CD8-positive, alpha-beta T cell (primary cell): ENCODE measurements at regions of chr17 and their contacts with region 1.

Region 1: DNA sequence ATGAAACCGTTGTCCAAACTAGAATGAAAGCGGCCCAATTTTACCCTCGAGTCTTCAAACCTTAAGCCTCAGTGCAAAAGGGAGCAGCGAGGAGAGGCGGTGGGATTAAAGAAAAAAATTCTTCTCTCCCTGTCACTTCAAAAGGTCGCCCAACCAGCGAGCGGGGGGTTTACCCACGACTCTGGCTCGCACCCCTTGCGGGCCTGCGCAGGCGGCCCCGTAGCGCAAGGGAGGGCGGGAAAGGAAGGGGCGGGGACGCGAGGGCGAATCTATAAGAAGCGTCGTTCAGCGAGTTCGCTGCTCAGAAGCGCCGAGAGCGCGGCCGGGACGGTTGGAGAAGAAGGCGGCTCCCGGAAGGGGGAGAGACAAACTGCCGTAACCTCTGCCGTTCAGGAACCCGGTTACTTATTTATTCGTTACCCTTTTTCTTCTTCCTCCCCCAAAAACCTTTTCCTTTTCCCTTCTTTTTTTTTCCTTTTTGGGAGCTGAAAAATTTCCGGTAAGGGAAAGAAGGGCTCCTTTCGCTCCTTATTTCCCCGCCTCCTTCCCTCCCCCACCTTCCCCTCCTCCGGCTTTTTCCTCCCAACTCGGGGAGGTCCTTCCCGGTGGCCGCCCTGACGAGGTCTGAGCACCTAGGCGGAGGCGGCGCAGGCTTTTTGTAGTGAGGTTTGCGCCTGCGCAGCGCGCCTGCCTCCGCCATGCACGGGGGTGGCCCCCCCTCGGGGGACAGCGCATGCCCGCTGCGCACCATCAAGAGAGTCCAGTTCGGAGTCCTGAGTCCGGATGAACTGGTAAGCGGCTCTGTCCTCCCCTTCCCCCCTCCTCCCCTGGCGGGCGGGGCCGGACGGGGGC is at the start of gene POLR2A:
- DNase-seq: peak; percentile 96 to 99 (median 98)
- ATAC-seq: peak; percentile 66
- H3K4me3 ChIP-seq: peak within 1 kb of the TSS; percentile 95 to 98
- H3K4me3 Mint-ChIP-seq: peak within 1 kb of the TSS; percentile 100
- H3K27ac ChIP-seq: peak within 1 kb of the TSS; percentile 99 to 100
- H3K27ac Mint-ChIP-seq: peak within 1 kb of the TSS; percentile 100
- H3K4me1 ChIP-seq: peaks cover 58% of the 10 kb centered on the region
- H3K4me1 Mint-ChIP-seq: peaks cover 74% of the 10 kb centered on the region
- H3K27me3 ChIP-seq: no peaks in the 10 kb centered on the region
- H3K27me3 Mint-ChIP-seq: no peaks in the 10 kb centered on the region
- CTCF ChIP-seq: no peak
- total RNA-seq, gene POLR2A: 508 to 546 TPM

Region 2: GRCh38 chr17:6677158-6677831 is 807.0 kb before region 1 on chr17:
- CTCF ChIA-PET with region 1: no interaction called
- POLR2A ChIA-PET with region 1: no interaction called
- intact Hi-C with region 1: no loop called
- DNase-seq: peak in 2 of 9 experiments; percentile 24 to 27
- ATAC-seq: peak; percentile 11
- H3K4me3 ChIP-seq: no peak overlapping the region
- H3K4me3 Mint-ChIP-seq: no peak overlapping the region
- H3K27ac ChIP-seq: no peak overlapping the region
- H3K27ac Mint-ChIP-seq: no peak overlapping the region
- H3K4me1 ChIP-seq: peaks cover 13% of the 10 kb centered on the region
- H3K4me1 Mint-ChIP-seq: peaks cover 5% of the 10 kb centered on the region
- H3K27me3 ChIP-seq: no peaks in the 10 kb centered on the region
- H3K27me3 Mint-ChIP-seq: peaks cover 29% of the 10 kb centered on the region
- CTCF ChIP-seq: no peak

Region 3: DNA sequence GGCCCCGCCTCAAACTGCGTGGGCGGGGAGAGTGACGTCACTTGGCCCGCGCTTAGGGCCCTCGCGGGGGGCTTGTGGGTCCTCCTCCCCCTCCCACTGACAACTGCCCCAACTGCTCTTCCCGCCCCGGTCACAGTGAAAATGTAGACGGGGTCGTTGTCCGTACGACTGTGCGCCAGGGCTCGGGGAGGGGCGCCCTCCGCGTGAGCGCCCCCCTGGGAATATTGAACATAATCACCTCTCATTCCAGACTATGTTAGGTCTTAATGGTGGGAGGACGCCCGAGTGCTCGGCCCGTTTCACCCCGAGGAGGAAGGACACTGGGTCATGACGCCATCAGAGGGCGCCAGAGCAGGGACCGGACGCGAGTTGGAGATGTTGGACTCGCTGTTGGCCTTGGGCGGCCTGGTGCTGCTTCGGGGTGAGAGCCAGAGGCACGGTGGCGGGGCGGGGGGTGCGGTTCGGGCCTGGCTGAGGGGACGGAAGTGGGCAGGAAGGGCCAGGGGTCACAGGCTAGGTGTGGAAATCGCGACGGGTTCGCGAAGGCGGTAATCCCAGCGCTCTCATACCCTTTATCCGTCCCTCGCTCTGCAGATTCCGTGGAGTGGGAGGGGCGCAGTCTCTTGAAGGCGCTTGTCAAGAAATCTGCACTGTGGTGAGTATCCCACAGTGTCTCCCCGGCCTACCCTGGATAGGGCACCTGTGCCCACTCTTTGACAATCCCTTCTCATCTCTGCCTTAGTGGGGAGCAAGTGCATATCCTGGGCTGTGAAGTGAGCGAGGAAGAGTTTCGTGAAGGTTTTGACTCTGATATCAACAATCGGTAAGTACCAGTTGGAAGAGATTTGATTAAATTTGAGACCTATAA is 231.9 kb before region 1 on chr17 and contains the start of gene ELP5:
- CTCF ChIA-PET with region 1: no interaction called
- POLR2A ChIA-PET with region 1: interaction called, 3 read pairs
- intact Hi-C with region 1: loop called in 1 of 2 experiments (anchors 2 kb)
- DNase-seq: peak; percentile 73 to 99 (median 87)
- ATAC-seq: peak; percentile 48
- H3K4me3 ChIP-seq: peak within 1 kb of the TSS; percentile 81 to 92
- H3K4me3 Mint-ChIP-seq: peak within 1 kb of the TSS; percentile 97
- H3K27ac ChIP-seq: peak within 1 kb of the TSS; percentile 99
- H3K27ac Mint-ChIP-seq: peak within 1 kb of the TSS; percentile 100
- H3K4me1 ChIP-seq: peaks cover 31% of the 10 kb centered on the region
- H3K4me1 Mint-ChIP-seq: peaks cover 44% of the 10 kb centered on the region
- H3K27me3 ChIP-seq: no peaks in the 10 kb centered on the region
- H3K27me3 Mint-ChIP-seq: no peaks in the 10 kb centered on the region
- CTCF ChIP-seq: no peak
- total RNA-seq, gene ELP5: 38.9 to 39.0 TPM

Region 4: GRCh38 chr17:7383742-7384488 is 100.4 kb before region 1 on chr17:
- CTCF ChIA-PET with region 1: no interaction called
- POLR2A ChIA-PET with region 1: interaction called, 4 read pairs
- intact Hi-C with region 1: loop called in 1 of 2 experiments (anchors 1 kb)
- DNase-seq: peak; percentile 60 to 91 (median 80)
- ATAC-seq: peak; percentile 94
- H3K4me3 ChIP-seq: peak overlapping the region; percentile 66 to 75
- H3K4me3 Mint-ChIP-seq: peak overlapping the region; percentile 88
- H3K27ac ChIP-seq: peak overlapping the region; percentile 80 to 92
- H3K27ac Mint-ChIP-seq: peak overlapping the region; percentile 96
- H3K4me1 ChIP-seq: peaks cover 21% of the 10 kb centered on the region
- H3K4me1 Mint-ChIP-seq: peaks cover 8% of the 10 kb centered on the region
- H3K27me3 ChIP-seq: peaks cover 12 to 14% of the 10 kb centered on the region in 2 experiments
- H3K27me3 Mint-ChIP-seq: peaks cover 29% of the 10 kb centered on the region
- CTCF ChIP-seq: no peak

Region 5: GRCh38 chr17:7444682-7445618 is 39.3 kb before region 1 on chr17 and contains the start of gene CHRNB1:
- CTCF ChIA-PET with region 1: interaction called, 5 read pairs
- POLR2A ChIA-PET with region 1: interaction called, 27 read pairs
- intact Hi-C with region 1: no loop called
- DNase-seq: peak in 3 of 9 experiments; percentile 29 to 47 (median 30)
- ATAC-seq: peak; percentile 14
- H3K4me3 ChIP-seq: peak within 1 kb of the TSS; percentile 32 to 37
- H3K4me3 Mint-ChIP-seq: peak within 1 kb of the TSS; percentile 84
- H3K27ac ChIP-seq: no peak within 1 kb of the TSS
- H3K27ac Mint-ChIP-seq: no peak within 1 kb of the TSS
- H3K4me1 ChIP-seq: peaks cover 32% of the 10 kb centered on the region
- H3K4me1 Mint-ChIP-seq: peaks cover 30% of the 10 kb centered on the region
- H3K27me3 ChIP-seq: peaks cover 14 to 38% of the 10 kb centered on the region in 2 experiments
- H3K27me3 Mint-ChIP-seq: peaks cover 45% of the 10 kb centered on the region
- CTCF ChIP-seq: no peak
- total RNA-seq, gene CHRNB1: 3.0 to 4.5 TPM

Region 6: GRCh38 chr17:7496470-7497183 is 12.3 kb after region 1 on chr17:
- CTCF ChIA-PET with region 1: interaction called, 10 read pairs
- POLR2A ChIA-PET with region 1: interaction called, 4 read pairs
- intact Hi-C with region 1: no loop called
- DNase-seq: peak in 1 of 9 experiments; percentile 14
- ATAC-seq: no peak
- H3K4me3 ChIP-seq: no peak overlapping the region
- H3K4me3 Mint-ChIP-seq: no peak overlapping the region
- H3K27ac ChIP-seq: no peak overlapping the region
- H3K27ac Mint-ChIP-seq: no peak overlapping the region
- H3K4me1 ChIP-seq: peaks cover 3% of the 10 kb centered on the region
- H3K4me1 Mint-ChIP-seq: peaks cover 29% of the 10 kb centered on the region
- H3K27me3 ChIP-seq: no peaks in the 10 kb centered on the region
- H3K27me3 Mint-ChIP-seq: no peaks in the 10 kb centered on the region
- CTCF ChIP-seq: no peak

Region 7: GRCh38 chr17:7583253-7584109 is 99.2 kb after region 1 on chr17 and contains the start of gene MPDU1:
- CTCF ChIA-PET with region 1: no interaction called
- POLR2A ChIA-PET with region 1: interaction called, 7 read pairs
- intact Hi-C with region 1: loop called in 1 of 2 experiments (anchors 1 kb)
- DNase-seq: peak; percentile 85 to 98 (median 94)
- ATAC-seq: peak; percentile 83
- H3K4me3 ChIP-seq: peak within 1 kb of the TSS; percentile 90 to 93
- H3K4me3 Mint-ChIP-seq: peak within 1 kb of the TSS; percentile 100
- H3K27ac ChIP-seq: peak within 1 kb of the TSS; percentile 92 to 99
- H3K27ac Mint-ChIP-seq: peak within 1 kb of the TSS; percentile 100
- H3K4me1 ChIP-seq: peaks cover 40% of the 10 kb centered on the region
- H3K4me1 Mint-ChIP-seq: peaks cover 47% of the 10 kb centered on the region
- H3K27me3 ChIP-seq: no peaks in the 10 kb centered on the region
- H3K27me3 Mint-ChIP-seq: no peaks in the 10 kb centered on the region
- CTCF ChIP-seq: no peak
- total RNA-seq, gene MPDU1: 16.6 to 17.2 TPM